MCF 10A (cell line): ENCODE measurements at regions of chr3 and their contacts with region 1.

Region 1: DNA sequence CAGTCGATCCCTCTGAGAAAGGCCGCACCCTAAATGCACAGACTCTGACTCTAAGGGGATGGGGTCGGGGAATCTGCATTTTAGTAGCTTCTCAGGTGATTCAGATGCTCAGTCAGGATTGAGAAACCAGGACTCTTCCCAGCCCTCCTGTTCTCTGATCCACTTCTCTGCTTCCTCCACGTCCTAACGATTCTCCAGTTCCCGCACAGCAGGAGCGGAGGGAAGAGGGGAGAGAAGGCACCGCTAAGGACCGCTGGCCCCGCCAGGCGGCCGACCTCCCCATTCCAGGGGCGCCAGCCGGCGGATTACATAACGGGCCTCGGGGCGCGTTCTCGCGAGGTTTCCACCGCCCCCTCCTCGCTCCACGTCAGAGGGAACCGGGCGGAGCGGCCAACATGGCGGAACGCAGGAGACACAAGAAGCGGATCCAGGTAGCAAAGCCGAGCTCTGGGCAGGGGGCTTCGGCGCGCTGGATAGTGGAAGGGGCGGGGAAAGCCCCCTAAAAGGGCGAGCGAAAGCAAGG is at the start of gene SEC62:
- DNase-seq: peak; percentile 90
- H3K4me3 Mint-ChIP-seq: peak within 1 kb of the TSS; percentile 68
- H3K27ac Mint-ChIP-seq: peak within 1 kb of the TSS; percentile 99
- H3K4me1 Mint-ChIP-seq: peaks cover 17% of the 10 kb centered on the region
- H3K27me3 Mint-ChIP-seq: no peaks in the 10 kb centered on the region
- CTCF ChIP-seq: no peak
- total RNA-seq, gene SEC62: 58.5 and 62.1 TPM in 2 replicates

Region 2: DNA sequence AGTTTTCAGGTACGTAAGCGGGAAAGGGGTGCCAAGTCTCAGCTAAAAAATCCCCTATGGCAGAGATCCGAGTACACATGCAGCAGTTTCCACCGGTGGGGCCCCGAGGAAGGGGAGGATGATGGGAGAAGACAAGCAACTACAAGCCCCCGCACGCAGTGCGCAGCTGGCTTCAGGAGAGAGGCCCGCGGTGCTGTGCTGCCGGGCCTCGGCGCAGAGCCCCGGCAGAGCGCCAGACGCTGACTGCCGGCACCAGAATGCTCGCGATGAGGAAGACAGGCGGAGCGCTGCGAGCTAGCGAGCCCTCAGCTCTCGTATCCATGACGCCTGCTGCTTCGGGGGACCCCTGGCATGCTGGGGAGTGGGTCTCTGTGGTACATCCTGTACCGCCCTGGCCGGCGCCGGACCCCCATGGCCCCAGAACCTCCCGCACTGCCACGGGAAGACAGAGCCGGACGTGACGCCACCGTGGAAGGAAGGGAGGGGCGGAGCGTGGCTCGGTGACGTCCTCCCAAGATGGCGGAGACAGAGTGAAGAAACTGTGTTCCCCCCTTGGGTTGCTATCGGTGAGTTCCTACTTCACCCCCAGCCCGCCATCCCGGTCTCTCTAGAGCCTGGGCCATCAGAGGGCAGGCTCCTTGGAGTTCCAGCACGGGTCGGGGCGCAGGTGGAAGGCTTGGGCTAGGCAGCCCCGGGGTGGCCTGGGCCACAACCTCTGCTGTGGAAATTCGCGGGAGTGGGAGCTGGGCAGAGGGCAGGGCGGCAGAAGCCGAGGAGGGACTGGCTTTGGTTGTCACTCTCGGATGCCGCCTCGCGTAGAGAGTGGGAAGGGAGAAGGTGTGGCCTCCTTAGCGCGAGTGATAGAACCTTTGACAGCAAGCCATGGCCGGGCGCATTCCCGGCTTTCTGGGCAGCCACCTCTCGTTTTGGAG is 193.3 kb before region 1 on chr3 and contains the start of gene MYNN:
- CTCF ChIA-PET with region 1: interaction called, 6 read pairs
- POLR2A ChIA-PET with region 1: interaction called, 35 read pairs
- intact Hi-C with region 1: loop called (anchors 2 kb)
- DNase-seq: peak; percentile 87
- H3K4me3 Mint-ChIP-seq: peak within 1 kb of the TSS; percentile 94
- H3K27ac Mint-ChIP-seq: peak within 1 kb of the TSS; percentile 99
- H3K4me1 Mint-ChIP-seq: peaks cover 4% of the 10 kb centered on the region
- H3K27me3 Mint-ChIP-seq: no peaks in the 10 kb centered on the region
- CTCF ChIP-seq: no peak
- total RNA-seq, gene MYNN: 18.0 and 20.4 TPM in 2 replicates

Region 3: DNA sequence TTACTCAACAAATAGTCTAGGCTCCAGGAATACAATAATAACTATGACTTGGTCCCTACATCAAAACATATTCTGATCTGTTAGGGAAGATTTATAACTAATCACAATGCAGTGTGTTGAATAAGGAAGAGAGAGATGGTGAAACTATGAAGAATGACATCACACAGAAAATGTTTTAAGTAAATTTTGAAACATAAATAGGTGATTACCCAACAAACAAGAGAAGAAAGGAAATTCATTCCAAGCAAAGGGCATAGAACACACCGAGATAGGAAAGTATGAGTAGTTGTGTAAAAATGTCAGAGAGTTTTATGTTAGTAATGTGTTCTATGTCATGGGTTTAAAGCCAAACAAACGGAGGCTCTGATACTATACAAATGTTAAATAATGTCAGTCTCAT is 13.6 kb after region 1 on chr3:
- CTCF ChIA-PET with region 1: interaction called, 5 read pairs
- POLR2A ChIA-PET with region 1: interaction called, 20 read pairs
- intact Hi-C with region 1: no loop called
- DNase-seq: peak; percentile 44
- H3K4me3 Mint-ChIP-seq: no peak overlapping the region
- H3K27ac Mint-ChIP-seq: no peak overlapping the region
- H3K4me1 Mint-ChIP-seq: peaks cover 12% of the 10 kb centered on the region
- H3K27me3 Mint-ChIP-seq: no peaks in the 10 kb centered on the region
- CTCF ChIP-seq: no peak